Activated CD8-positive, alpha-beta T cell treated with anti-CD3 and anti-CD28 coated beads, Interleukin-2, amount 10 ng/mL, durations not matched to agents 7 days and 5 days (primary cell): ENCODE measurements at regions of chr12 and their contacts with region 1.

Region 1: GRCh38 chr12:94133964-94134795 is 14.2 kb upstream of the PLXNC1 start:
- DNase-seq: peak; percentile 64
- ATAC-seq: peak; percentile 93
- H3K4me3 Mint-ChIP-seq: no peak overlapping the region
- H3K27ac Mint-ChIP-seq: no peak overlapping the region
- H3K4me1 Mint-ChIP-seq: peaks cover 14% of the 10 kb centered on the region
- H3K27me3 Mint-ChIP-seq: peaks cover 6% of the 10 kb centered on the region

Region 2: DNA sequence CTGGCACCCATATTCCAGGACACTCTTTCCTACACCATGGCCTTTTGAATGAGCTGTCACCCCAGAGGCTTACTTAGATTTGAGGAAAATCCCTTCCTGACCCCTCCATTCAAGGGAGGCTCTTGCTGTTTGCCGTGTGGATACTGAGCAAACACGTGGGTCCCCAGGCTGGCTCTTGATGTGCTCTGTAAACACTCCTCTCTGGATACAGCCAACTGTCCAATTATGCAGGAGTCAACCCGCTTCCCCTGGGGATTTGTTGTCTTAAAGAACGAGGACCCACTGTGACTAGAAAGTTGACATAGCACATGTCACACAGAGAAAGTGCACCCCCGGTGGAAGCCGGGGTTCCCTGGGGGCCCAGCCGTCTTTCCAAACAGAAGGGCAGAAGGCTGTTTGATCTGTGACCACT is 401.3 kb after region 1 on chr12:
- CTCF ChIA-PET with region 1: interaction called, 19 read pairs
- POLR2A ChIA-PET with region 1: interaction called, 4 read pairs
- DNase-seq: no peak
- ATAC-seq: no peak
- H3K4me3 Mint-ChIP-seq: no peak overlapping the region
- H3K27ac Mint-ChIP-seq: peak overlapping the region; percentile 64
- H3K4me1 Mint-ChIP-seq: peaks cover 39% of the 10 kb centered on the region
- H3K27me3 Mint-ChIP-seq: peaks cover 2% of the 10 kb centered on the region